Activated CD8-positive, alpha-beta T cell treated with anti-CD3 and anti-CD28 coated beads for 36 hours (primary cell): ENCODE measurements at regions of chr1 and their contacts with region 1.

Region 1: DNA sequence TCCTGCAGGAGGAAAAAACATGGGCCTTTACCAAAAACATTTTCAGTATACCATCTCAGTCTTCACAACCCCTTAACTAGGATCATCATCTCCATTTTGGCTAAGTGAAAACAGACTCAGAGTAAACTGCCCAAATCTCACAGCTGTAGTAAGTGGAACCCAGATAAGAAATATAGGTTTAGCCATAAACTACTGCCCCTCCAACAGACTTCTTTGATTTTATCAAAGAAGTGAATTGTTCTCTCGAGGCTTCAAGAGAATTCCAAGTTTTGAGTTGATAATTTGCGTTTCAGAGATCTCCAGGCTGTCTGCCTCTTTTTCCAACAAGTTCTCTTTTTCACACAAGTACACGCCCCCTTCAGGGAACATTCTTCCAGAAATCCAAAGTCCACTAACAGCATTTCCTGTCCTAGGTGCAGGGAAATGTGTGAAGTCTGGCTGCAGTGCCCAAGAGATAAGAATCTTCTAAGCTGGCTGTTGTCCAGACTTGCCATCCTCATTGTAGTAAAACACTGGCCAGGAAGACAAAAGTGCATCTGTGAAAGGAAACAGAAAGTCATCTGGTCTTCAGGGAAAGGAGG is 30.8 kb downstream of the RNF19B start:
- DNase-seq: no peak
- ATAC-seq: no peak
- H3K4me3 Mint-ChIP-seq: no peak overlapping the region
- H3K27ac Mint-ChIP-seq: no peak overlapping the region
- H3K4me1 Mint-ChIP-seq: peaks cover 5% of the 10 kb centered on the region
- H3K27me3 Mint-ChIP-seq: no peaks in the 10 kb centered on the region
- CTCF ChIP-seq: peak; percentile 35

Region 2: DNA sequence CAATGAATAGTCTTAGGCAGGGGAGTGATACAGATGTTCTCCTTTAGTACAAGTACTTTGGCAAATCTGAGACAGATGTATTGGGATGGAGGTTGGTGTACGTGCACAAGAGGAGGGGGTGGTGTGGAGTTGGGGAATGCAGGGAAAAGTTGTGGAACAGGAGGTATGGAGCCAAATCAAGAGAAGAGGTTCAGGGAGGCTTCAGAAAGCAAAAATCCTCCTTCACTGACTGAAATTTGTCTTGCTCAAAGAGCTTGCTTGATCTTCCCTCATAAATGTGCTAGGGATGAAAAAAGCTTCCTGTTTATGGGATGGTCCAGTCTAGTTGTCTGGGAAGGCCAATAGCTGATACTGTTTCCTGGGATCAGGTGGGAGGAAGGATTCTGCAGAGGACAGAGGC is 25.0 kb after region 1 on chr1:
- CTCF ChIA-PET with region 1: interaction called, 12 read pairs
- POLR2A ChIA-PET with region 1: no interaction called
- intact Hi-C with region 1: no loop called
- DNase-seq: no peak
- ATAC-seq: no peak
- H3K4me3 Mint-ChIP-seq: no peak overlapping the region
- H3K27ac Mint-ChIP-seq: no peak overlapping the region
- H3K4me1 Mint-ChIP-seq: peaks cover 60% of the 10 kb centered on the region
- H3K27me3 Mint-ChIP-seq: no peaks in the 10 kb centered on the region
- CTCF ChIP-seq: no peak

Region 3: GRCh38 chr1:33001282-33001681 is 67.5 kb after region 1 on chr1:
- CTCF ChIA-PET with region 1: interaction called, 34 read pairs
- POLR2A ChIA-PET with region 1: no interaction called
- intact Hi-C with region 1: loop called (anchors 10 kb)
- DNase-seq: peak; percentile 31
- ATAC-seq: no peak
- H3K4me3 Mint-ChIP-seq: no peak overlapping the region
- H3K27ac Mint-ChIP-seq: no peak overlapping the region
- H3K4me1 Mint-ChIP-seq: peaks cover 23% of the 10 kb centered on the region
- H3K27me3 Mint-ChIP-seq: no peaks in the 10 kb centered on the region
- CTCF ChIP-seq: peak; percentile 15

Region 4: DNA sequence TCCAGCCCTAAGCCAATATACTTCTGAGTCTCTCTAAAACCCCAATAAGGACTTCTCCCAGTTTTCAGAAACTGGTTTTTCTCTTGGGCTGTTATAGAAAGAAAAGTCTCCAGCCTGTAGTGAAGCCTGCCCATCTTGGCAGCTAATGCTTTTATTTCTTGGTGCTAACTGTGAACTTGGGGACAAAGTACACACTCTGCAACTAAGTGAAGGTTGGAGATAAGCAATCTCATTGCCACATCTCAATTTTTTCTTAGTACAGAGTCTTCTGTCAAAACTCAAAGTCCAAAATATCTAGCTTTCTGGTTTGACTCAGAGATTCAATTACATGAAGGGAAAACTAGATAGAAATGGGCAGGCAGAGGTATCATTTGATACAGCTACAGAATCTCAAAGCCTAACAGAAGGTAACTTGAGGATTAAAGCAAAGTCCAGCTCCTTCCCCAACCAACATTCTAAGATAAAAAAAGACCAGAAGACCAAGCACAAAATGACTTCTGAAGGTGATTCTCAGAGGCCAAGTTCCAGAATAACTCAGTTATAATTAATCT is 88.9 kb after region 1 on chr1:
- CTCF ChIA-PET with region 1: interaction called, 12 read pairs
- POLR2A ChIA-PET with region 1: no interaction called
- intact Hi-C with region 1: no loop called
- DNase-seq: no peak
- ATAC-seq: no peak
- H3K4me3 Mint-ChIP-seq: no peak overlapping the region
- H3K27ac Mint-ChIP-seq: no peak overlapping the region
- H3K4me1 Mint-ChIP-seq: peaks cover 59% of the 10 kb centered on the region
- H3K27me3 Mint-ChIP-seq: no peaks in the 10 kb centered on the region
- CTCF ChIP-seq: no peak

Region 5: DNA sequence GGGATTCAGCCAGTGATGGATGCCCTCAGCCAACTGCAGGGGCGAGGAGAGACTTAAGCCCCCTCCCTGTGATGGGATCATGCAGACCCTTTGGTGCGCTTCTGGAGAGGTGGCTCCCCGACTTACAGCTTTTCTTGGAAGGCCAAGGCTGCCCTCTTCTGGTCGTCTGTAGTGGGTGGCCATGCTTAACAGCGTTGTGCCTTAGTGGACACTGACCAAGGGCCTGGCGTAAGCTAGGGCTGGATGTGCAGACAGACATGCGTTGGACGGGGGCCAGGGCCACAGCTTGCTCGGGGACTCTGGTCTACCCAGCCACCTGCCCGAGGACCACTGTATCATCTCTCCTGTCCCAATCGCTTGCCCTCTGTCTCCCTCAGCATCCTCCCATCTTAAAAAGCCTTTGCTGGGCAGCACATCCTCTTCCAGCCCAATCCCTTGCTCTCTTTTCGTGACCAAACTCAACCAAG is 152.6 kb after region 1 on chr1:
- CTCF ChIA-PET with region 1: interaction called, 44 read pairs
- POLR2A ChIA-PET with region 1: no interaction called
- intact Hi-C with region 1: loop called (anchors 10 kb)
- DNase-seq: peak; percentile 70
- ATAC-seq: no peak
- H3K4me3 Mint-ChIP-seq: no peak overlapping the region
- H3K27ac Mint-ChIP-seq: no peak overlapping the region
- H3K4me1 Mint-ChIP-seq: peaks cover 29% of the 10 kb centered on the region
- H3K27me3 Mint-ChIP-seq: no peaks in the 10 kb centered on the region
- CTCF ChIP-seq: peak; percentile 61

Region 6: DNA sequence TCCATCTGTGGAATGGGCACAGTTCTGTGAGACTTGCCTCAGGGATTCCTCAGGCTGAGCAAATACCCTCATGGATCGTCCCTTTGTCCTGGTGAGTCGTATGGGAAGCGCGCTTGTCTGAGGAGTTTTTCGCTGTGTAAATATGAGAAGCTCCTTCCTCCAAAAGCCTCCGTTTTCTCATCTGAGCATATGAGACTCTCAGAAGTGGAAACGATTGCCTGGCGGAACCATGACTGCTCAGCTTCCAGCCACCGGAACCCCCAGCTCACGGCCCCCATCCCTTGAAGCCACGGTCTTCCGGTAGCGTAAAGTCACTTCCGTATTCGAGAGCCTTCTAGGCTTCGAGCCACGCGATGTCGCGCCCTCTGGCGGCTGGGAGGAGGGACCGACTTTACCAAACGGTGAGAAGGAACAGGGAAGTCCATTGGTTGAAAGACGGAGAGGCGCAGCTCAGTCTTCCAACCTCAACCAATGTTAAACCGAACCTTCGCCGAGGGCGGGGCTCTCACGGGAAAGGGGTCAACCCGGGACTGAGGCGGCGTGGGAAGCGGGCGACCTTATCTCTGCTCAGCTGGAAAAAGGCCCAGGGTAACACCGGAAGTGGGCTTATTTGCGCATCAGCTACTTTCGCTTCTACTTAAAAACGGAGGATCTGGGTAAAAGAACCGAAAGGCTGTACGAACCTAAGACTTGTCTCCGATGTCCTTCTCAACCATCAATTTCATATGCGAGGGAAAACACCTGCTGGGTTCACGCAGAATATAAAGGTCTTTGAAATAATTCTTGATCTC is 193.4 kb after region 1 on chr1:
- CTCF ChIA-PET with region 1: interaction called, 13 read pairs
- POLR2A ChIA-PET with region 1: interaction called, 6 read pairs
- intact Hi-C with region 1: no loop called
- DNase-seq: peak; percentile 100
- ATAC-seq: peak; percentile 95
- H3K4me3 Mint-ChIP-seq: peak overlapping the region; percentile 93
- H3K27ac Mint-ChIP-seq: peak overlapping the region; percentile 97
- H3K4me1 Mint-ChIP-seq: peaks cover 41% of the 10 kb centered on the region
- H3K27me3 Mint-ChIP-seq: no peaks in the 10 kb centered on the region
- CTCF ChIP-seq: peak; percentile 79